PC-9 (cell line): ENCODE measurements at regions of chr1 and their contacts with region 1.

Region 1: DNA sequence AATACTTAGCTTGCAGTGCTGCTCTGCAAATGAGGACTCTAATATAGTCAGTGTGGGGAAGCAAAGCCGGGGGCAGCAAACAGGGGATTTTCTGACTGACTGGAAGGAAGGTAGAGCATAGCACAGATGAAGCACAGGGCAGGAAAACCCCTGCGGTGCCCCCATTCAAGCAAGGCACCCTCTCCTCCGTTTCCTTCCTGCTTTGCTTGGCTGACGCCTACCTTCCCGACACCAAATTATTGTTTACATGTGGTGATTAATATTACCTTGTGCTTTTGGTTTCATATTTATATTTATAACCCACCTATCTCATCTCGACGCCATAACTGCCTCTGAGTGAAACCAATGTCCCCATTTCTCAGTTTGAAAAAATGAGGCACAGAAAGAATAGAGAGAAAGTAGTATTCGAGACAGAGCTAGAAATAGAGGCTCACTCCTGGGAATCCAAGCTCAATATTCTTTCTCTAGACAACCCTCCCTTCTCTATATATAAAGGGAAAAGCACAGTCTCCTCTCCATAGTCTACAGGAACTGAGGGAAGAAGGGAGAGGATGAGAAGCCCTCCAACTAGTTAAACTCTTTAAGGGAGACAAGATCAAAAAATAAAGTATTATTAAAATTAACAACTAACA is 41.3 kb downstream of the PIK3C2B start:
- DNase-seq: no peak
- H3K4me3 ChIP-seq: no peak overlapping the region
- H3K27ac ChIP-seq: no peak overlapping the region; the same call in 1 of the 2 replicates
- H3K4me1 ChIP-seq: peaks cover 48% of the 10 kb centered on the region
- H3K27me3 ChIP-seq: no peaks in the 10 kb centered on the region
- CTCF ChIP-seq: no peak

Region 2: GRCh38 chr1:204417231-204417997 is 35.8 kb before region 1 on chr1:
- CTCF ChIA-PET with region 1: no interaction called
- POLR2A ChIA-PET with region 1: no interaction called
- intact Hi-C with region 1: loop called (anchors 1 kb)
- DNase-seq: peak; percentile 77 to 96
- H3K4me3 ChIP-seq: peak overlapping the region; percentile 51
- H3K27ac ChIP-seq: peak overlapping the region; percentile 98
- H3K4me1 ChIP-seq: peaks cover 73% of the 10 kb centered on the region
- H3K27me3 ChIP-seq: no peaks in the 10 kb centered on the region
- CTCF ChIP-seq: no peak

Region 3: DNA sequence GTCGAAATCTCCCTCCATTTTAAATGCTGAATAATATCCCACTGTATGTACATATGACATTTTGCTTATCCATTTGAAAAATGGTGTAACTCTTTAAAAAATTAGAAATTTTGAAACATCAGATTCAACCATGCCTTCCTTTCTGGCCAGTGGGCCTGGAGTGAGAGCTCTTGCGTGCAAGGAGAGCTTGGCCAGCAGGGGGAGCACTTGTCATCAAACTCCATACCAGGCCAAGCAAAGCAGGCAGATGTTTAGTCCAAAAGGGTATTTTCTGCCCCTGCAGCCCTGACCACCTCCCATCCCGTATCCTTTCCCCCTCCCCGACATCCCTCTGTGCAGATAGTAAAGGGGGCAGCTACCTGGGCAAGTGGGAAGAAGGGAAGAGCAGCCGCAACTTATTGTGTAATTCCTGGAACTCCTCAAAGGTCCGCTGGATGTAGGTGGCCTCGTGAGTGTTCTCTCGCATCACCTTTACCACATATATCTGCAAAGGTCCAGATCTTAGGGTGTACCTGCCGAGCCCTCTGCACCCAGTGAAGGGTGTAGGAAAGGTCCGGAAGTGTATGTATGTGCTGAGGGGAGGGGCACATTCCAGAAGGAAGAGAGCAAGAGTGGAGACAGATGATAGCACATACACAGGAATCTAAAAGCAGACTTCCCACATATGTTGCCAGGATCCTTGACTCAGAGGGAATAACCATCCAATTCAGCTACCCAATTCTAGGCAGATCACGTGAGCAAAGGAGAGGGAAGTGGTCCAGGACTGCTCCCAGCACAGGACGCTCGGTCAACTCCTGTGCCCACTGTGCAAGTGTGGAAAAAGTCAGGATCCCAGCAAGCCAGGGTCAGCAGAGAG is 21.7 kb before region 1 on chr1:
- CTCF ChIA-PET with region 1: interaction called, 3 read pairs
- POLR2A ChIA-PET with region 1: interaction called, 9 read pairs
- intact Hi-C with region 1: loop called (anchors 2 kb)
- DNase-seq: peak; percentile 58 to 73
- H3K4me3 ChIP-seq: no peak overlapping the region
- H3K27ac ChIP-seq: peak overlapping the region; percentile 35; the same call in 1 of the 2 replicates
- H3K4me1 ChIP-seq: peaks cover 45% of the 10 kb centered on the region
- H3K27me3 ChIP-seq: no peaks in the 10 kb centered on the region
- CTCF ChIP-seq: peak; percentile 95

Region 4: DNA sequence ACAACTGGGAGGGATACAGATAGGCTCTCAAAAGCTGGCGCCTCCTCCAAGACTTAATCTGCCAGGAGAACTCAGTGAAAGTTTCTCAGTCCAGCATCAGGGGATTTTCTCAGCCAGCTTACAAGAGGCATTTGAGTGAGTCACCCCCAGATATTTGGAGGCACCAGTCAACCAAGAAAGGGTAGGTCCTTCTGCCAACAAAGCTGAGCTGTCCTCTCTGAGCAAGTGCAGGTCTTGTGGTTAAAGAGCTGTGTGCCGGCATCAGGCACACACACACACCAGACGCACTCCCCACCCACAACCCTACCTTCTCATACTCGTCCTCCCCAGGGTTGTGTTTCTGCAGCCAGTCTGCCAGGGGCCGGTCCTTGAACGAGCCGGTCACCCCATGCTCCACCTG is 14.6 kb before region 1 on chr1:
- CTCF ChIA-PET with region 1: interaction called, 8 read pairs
- POLR2A ChIA-PET with region 1: interaction called, 24 read pairs
- intact Hi-C with region 1: loop called (anchors 1 kb)
- DNase-seq: peak; percentile 77 to 99
- H3K4me3 ChIP-seq: peak overlapping the region; percentile 13; the same call in 1 of the 2 replicates
- H3K27ac ChIP-seq: peak overlapping the region; percentile 89
- H3K4me1 ChIP-seq: peaks cover 90% of the 10 kb centered on the region
- H3K27me3 ChIP-seq: no peaks in the 10 kb centered on the region
- CTCF ChIP-seq: no peak